K562 (cell line): ENCODE measurements at regions of chr3 and their contacts with region 1.

Region 1: DNA sequence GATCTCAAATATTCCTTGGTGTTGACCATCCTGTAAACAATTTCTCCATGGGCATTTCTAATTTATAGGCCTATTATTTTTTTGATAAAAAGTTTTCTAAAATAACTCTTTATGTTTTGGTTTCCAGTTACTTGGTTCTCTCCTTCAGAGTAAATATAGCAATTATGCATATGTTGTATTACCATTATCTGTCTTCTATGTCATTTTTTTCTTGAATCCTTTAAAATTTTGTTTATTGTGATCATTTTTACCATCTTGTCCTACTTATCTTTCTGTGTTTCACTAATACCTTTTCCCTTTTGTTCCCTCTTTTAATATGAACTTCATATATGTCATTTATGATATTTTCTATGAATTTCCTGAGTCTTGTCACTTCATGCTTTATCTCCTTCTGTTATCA is 341.1 kb downstream of the PDCD6IP start:
- DNase-seq: no peak
- ATAC-seq: no peak
- H3K4me3 ChIP-seq: no peak overlapping the region
- H3K27ac ChIP-seq: no peak overlapping the region
- H3K4me1 ChIP-seq: no peaks in the 10 kb centered on the region
- H3K27me3 ChIP-seq: no peaks in the 10 kb centered on the region
- CTCF ChIP-seq: no peak
- EP300 ChIP-seq: no peak
- POLR2A ChIP-seq: no peak
- RAD21 ChIP-seq: no peak

Region 2: DNA sequence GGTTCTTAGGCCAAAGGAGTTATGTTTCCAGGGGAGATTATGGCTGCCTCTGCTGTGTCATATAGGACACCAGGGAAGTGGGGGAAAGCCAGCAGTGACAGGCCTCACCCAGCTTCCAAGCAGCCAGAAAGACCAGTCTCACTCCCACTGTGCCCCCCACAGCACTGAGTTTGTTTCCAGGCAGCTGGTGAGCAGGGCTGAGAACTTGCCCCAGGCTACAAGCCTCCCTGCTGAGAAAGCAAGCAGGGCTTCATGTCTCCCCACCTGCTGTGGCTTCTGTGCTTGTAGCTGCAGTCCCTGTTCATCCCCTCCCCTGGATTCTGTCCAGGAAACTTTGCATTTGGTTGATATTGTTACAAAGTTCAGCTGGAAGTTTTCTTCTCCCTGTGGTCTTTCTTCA is 35.2 kb after region 1 on chr3:
- CTCF ChIA-PET with region 1: no interaction called
- POLR2A ChIA-PET with region 1: no interaction called
- in situ Hi-C with region 1: loop called (anchors 5 kb)
- intact Hi-C with region 1: no loop called
- DNase-seq: no peak
- ATAC-seq: no peak; the same call in 2 of the 3 replicates
- H3K4me3 ChIP-seq: no peak overlapping the region
- H3K27ac ChIP-seq: no peak overlapping the region
- H3K4me1 ChIP-seq: no peaks in the 10 kb centered on the region
- H3K27me3 ChIP-seq: no peaks in the 10 kb centered on the region
- CTCF ChIP-seq: no peak
- EP300 ChIP-seq: no peak
- POLR2A ChIP-seq: no peak
- RAD21 ChIP-seq: no peak